ENCODE measurements at regions of chr21 and their contacts with region 1.

Region 1: DNA sequence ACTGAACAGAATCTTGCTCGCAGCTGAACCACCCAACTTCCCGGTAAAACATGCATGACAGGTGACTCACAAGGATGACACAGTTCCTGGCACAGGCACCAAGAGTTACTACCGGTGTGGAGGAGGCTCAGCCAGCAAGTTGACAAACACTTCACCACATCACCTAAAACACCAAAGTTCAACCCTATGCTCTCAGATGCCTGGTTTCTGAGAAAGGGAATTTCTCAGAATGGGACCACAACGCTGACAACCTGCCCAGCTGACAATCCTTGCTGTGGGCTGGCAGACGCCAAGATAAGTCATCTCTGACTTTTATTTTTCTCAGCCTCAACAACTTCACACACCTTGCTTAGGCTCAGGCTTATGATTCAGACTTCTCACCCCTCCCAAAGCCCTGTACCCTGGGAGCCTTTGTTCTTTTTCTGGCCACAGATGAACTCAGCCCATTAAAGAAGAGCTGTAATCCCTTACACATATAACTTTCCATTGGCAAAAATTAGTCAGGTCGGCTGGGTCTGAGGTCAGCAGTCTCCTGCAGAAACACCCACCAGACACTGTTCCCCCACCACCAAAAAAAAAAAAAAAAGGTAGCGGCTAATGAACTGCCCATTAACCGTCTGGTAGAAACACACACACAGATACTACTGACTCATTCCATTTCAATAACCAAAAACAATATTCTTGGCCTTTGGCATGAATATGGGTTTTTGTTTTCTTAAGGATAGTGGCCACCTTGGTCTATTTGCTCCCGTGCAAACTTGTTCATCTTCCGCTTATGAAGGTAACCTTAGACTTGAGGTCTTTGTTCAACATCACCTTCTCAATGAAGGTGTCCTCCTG is 10.8 kb upstream of the TIAM1 start:
- DNase-seq: peak; percentile 94
- H3K4me3 Mint-ChIP-seq: peak overlapping the region; percentile 2
- H3K27ac Mint-ChIP-seq: peak overlapping the region; percentile 88
- H3K4me1 Mint-ChIP-seq: peaks cover 47% of the 10 kb centered on the region
- H3K27me3 Mint-ChIP-seq: no peaks in the 10 kb centered on the region

Region 2: DNA sequence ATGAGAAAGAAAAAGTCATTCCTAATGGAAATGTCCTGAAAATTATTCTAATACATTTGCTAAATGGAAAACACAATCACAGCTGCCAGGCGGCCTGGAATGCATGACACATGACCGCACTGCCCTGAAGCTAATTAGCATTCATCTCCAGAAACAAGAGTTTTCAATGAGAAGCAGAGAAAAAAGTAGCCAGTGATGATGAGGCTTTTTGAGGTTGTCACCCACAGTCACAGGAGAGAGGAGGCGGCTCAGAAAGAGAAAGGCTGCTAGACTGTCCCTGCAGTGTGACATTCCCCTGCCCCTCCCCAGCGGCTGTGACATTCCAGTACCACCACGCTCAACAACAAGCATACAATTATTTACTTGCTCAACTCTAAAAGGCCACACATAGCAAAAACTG is 193.7 kb before region 1 on chr21:
- CTCF ChIA-PET with region 1: no interaction called
- intact Hi-C with region 1: loop called (anchors 1 kb)
- DNase-seq: peak; percentile 60
- H3K4me3 Mint-ChIP-seq: no peak overlapping the region
- H3K27ac Mint-ChIP-seq: peak overlapping the region; percentile 89
- H3K4me1 Mint-ChIP-seq: peaks cover 88% of the 10 kb centered on the region
- H3K27me3 Mint-ChIP-seq: no peaks in the 10 kb centered on the region

Region 3: DNA sequence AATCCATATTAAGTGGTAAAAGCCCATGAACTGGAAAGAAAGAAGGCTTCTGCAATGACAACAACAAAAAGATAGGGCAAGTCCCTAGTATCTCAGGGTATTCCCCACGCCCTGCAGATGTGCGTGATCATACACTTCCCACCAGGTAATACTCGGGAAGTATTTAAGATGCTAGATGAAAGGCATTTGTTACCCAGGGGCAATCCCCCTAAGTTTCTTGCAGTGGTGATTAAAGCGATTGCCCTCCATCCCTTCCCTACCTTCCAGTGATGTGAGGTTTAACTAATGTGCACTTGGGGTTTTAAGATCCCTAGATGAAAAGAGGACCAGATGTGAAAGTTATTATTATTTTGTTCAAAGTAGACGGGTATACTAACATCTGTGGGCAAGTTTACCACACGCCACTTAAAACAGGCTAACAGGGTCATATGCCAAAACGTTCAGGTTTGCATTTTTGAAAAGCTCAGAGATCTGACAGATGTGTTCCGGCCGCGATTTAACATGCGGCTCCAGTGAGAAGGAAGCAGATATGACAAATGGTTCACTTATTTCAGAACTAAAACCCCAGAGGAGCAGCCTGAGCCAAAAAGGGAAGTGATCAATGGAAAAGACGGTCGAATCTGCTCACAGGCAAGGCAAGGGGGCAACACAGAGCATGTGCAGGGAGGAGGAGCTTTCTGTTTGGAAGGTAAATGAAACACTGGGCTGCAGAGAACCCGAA is 28.1 kb before region 1 on chr21:
- CTCF ChIA-PET with region 1: interaction called, 4 read pairs
- intact Hi-C with region 1: loop called (anchors 1 kb)
- DNase-seq: peak; percentile 83
- H3K4me3 Mint-ChIP-seq: peak overlapping the region; percentile 45
- H3K27ac Mint-ChIP-seq: peak overlapping the region; percentile 92
- H3K4me1 Mint-ChIP-seq: peaks cover 37% of the 10 kb centered on the region
- H3K27me3 Mint-ChIP-seq: no peaks in the 10 kb centered on the region

Region 4: GRCh38 chr21:31410499-31411131 is 55.8 kb after region 1 on chr21:
- CTCF ChIA-PET with region 1: no interaction called
- intact Hi-C with region 1: loop called (anchors 1 kb)
- DNase-seq: peak; percentile 62
- H3K4me3 Mint-ChIP-seq: no peak overlapping the region
- H3K27ac Mint-ChIP-seq: no peak overlapping the region
- H3K4me1 Mint-ChIP-seq: peaks cover 10% of the 10 kb centered on the region
- H3K27me3 Mint-ChIP-seq: no peaks in the 10 kb centered on the region

Region 5: GRCh38 chr21:31558962-31559367 is 204.1 kb after region 1 on chr21:
- CTCF ChIA-PET with region 1: no interaction called
- intact Hi-C with region 1: loop called (anchors 1 kb)
- DNase-seq: peak; percentile 96
- H3K4me3 Mint-ChIP-seq: peak overlapping the region; percentile 89
- H3K27ac Mint-ChIP-seq: no peak overlapping the region
- H3K4me1 Mint-ChIP-seq: peaks cover 39% of the 10 kb centered on the region
- H3K27me3 Mint-ChIP-seq: peaks cover 23% of the 10 kb centered on the region

Region 6: DNA sequence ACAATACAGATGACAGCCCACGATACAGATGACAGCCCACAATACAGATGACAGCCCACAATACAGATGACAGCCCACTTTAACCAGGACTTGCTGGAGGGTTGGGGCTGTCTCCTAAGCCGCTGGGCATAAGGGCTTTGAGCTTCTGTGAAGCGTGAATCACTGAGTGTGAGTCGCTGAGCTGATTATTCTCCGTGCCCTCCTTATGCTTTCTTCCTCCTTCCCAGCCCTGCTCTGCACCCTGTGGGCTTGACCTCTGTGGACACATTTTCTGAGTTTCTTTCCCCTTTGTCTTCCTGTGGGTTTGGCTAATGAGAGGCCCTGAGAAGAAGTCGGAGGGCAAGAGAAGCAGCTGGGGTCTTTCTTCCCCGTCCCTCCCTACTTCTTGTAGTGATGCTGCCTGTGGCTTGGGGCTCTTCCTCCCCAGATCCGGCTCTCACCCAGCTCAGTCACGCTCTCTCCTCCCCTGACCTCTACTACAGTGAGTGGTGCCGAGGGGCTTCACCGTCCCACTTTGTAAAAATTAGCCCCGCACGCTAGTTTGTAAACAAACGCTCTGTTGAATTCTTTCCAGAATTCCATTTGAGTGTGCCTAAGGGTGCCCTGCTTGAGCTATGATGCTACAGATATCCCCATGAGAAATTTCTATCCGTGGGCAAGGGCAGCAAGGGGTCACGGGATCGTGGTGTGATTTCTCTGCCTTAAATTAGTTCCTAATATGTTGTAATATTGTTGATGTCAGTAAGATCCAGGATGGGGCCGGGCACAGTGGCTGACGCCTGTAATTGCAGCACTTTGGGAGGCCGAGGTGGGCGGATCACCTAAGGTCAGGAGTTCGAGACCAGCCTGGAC is 258.3 kb after region 1 on chr21:
- CTCF ChIA-PET with region 1: no interaction called
- intact Hi-C with region 1: no loop called
- DNase-seq: no peak
- H3K4me3 Mint-ChIP-seq: no peak overlapping the region
- H3K27ac Mint-ChIP-seq: no peak overlapping the region
- H3K4me1 Mint-ChIP-seq: no peaks in the 10 kb centered on the region
- H3K27me3 Mint-ChIP-seq: peaks cover 9% of the 10 kb centered on the region

Measured in activated naive CD4-positive, alpha-beta T cell treated with anti-CD3 and anti-CD28 coated beads for 36 hours (primary cell).